Mammary epithelial cell (primary cell): ENCODE measurements at regions of chr3 and their contacts with region 1.

Region 1: DNA sequence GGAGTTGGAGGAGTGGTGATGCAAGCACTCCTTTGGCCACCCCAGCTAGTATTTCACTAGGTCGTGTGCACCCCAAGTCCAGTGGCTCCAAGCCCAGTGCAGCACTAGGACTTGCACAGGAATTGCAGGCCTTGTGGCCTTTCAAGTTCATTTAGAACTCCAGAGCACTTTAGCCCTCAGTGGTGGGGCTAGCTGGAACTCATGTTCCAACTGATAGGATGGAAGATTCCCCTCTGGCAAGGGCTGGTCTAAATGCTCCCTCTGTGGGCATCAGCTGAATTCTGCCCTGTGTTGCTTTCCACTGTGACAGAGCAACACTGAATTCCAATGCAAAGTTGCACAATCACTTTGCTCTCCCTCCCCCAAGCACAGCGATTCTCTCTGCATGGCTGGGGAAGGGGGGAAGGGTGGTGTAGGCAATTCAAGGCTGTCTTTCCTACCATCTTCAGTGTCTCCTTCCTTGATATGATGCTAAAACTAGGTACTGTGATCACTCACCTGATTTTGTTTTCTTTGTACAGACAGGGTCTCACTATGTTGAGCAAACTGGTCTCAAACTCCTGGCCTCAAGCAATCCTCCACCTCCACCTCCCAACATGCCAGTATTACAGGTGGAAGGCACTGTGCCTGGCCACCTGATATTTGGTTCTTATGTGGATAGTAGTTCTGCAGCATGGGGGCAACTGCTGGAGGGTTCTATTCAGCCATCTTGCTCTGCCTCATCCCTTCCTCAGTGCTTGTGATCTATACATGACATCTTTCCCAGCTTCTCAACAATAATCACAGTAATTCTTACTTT is 10.3 kb downstream of the USF3 start:
- DNase-seq: peak; percentile 2
- H3K4me3 ChIP-seq: no peak overlapping the region
- H3K27ac ChIP-seq: no peak overlapping the region
- H3K4me1 ChIP-seq: no peaks in the 10 kb centered on the region
- H3K27me3 ChIP-seq: no peaks in the 10 kb centered on the region
- CTCF ChIP-seq: no peak

Region 2: DNA sequence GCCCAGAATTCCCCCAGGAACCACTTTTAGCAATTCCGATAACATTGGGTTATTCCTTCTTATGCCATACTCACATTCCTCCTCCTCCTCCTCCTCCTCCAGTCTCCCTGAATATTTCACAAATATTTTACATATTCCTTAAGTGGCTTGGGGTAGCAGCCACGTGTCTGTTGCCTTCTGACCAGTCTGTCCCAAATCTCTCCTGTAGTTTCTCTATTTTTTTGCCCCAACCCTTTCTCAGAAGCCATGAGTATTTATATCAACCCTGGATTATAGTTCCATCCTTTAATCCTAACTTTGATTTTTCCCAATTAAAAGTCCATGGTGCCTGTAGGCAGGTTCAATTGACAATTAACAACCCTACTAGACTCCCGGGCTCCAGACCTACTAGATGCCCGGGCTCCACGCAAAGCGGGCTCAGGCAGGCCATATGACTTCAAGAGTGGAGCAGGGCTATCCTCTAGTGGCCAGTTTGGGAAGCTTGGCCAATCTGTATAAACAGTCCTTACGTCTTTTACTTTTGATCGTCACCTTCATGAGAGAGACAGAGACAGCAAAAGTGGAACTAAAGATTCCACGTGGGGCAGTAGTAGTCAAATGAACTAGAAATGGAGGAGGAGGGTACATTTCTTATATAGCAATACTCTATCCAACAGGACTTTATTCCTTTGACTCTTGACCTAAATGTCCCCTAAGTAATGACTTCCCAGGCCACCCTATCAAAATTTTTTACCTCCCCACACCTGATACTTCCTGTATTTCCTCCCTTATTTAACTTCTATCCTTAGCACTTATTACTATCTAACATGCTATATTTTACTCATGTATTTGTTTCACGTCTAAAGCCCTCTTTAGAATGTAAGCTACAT is 59.4 kb before region 1 on chr3:
- CTCF ChIA-PET with region 1: no interaction called
- dilution Hi-C with region 1: no loop called
- in situ Hi-C with region 1: no loop called
- intact Hi-C with region 1: no loop called
- DNase-seq: peak; percentile 55
- H3K4me3 ChIP-seq: no peak overlapping the region
- H3K27ac ChIP-seq: no peak overlapping the region
- H3K4me1 ChIP-seq: no peaks in the 10 kb centered on the region
- H3K27me3 ChIP-seq: no peaks in the 10 kb centered on the region
- CTCF ChIP-seq: peak; percentile 94 to 99

Region 3: GRCh38 chr3:113890256-113890900 is 204.2 kb after region 1 on chr3:
- CTCF ChIA-PET with region 1: interaction called, 10 read pairs
- dilution Hi-C with region 1: no loop called
- in situ Hi-C with region 1: no loop called
- intact Hi-C with region 1: no loop called
- DNase-seq: no peak
- H3K4me3 ChIP-seq: no peak overlapping the region
- H3K27ac ChIP-seq: no peak overlapping the region
- H3K4me1 ChIP-seq: no peaks in the 10 kb centered on the region
- H3K27me3 ChIP-seq: no peaks in the 10 kb centered on the region
- CTCF ChIP-seq: no peak

Region 4: DNA sequence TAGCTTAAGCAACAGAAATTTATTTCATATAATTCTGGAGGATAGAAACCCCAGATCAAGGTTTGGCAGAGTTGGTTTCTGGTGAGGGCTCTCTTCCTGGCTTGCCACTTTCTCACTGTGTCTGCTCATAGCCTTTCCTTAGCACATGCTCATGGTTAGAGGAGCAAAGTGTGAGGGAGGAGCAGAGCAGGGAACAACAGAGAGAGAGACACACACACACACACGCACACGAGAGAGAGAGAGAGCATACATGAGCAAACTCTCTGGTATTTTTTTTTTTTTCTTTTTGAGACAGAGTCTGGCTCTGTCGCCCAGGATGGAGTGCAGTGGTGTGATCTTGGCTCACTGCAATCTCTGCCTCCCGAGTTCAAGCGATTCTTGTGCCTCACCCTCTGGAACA is 224.8 kb after region 1 on chr3:
- CTCF ChIA-PET with region 1: no interaction called
- dilution Hi-C with region 1: no loop called
- in situ Hi-C with region 1: no loop called
- intact Hi-C with region 1: no loop called
- DNase-seq: no peak
- H3K4me3 ChIP-seq: no peak overlapping the region
- H3K27ac ChIP-seq: no peak overlapping the region
- H3K4me1 ChIP-seq: no peaks in the 10 kb centered on the region
- H3K27me3 ChIP-seq: no peaks in the 10 kb centered on the region
- CTCF ChIP-seq: no peak